ENCODE measurements at regions of chr11 and their contacts with region 1.

Region 1: GRCh38 chr11:3091791-3092602 is 34.8 kb upstream of the CARS1 start:
- DNase-seq: peak; percentile 54 to 88 (median 75)

Region 2: GRCh38 chr11:2489083-2489482 is 602.9 kb before region 1 on chr11:
- intact Hi-C with region 1: no loop called
- DNase-seq: no peak

Region 3: DNA sequence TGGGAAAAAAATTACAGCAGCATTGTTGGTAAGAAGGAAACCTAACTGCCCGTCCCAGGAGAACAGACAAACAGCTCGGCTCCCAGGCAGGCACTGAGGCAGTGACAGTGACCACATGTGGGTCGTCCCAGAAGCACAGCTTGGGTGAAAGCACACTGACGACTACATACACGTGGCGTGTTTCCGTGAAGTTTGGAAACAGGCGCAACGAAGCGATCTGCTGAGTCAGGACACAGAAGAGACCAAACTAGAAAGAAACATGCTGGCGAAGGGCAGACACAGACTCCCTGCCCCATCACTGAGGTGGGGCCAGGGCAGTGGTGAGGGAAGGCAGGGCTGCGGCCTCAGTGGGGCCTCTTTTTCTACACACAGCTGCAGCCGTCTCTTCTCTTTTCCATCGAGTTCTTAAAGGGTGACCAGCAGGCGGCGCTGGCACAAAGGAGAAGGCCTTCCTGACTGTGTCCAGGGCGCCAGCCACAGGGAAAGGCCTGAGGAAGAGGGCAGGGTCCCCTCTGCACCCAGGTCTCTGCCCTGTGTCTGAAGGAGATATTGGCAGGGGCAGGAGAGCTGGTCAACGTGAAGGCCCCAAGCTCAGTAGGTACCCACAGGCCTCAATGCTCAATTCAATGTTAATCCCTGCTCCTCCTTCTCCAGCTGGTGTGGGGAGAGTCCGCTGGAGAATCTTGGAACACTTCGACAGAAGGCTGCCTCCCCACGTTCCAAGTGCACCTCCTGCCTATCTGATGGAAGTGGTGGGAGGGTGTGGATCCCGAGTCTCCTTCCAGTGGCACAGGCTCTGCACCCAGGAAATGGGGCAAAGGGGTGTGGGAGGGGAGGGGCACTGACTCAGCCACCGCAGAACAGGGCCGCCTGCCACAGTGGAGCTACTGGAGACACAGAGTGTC is 54.7 kb before region 1 on chr11:
- intact Hi-C with region 1: loop called (anchors 2 kb)
- DNase-seq: peak; percentile 77 to 96 (median 89)

Region 4: GRCh38 chr11:3049430-3050243 is 42.4 kb before region 1 on chr11:
- intact Hi-C with region 1: loop called (anchors 5 kb)
- DNase-seq: peak; percentile 82 to 98 (median 93)

Region 5: GRCh38 chr11:3123761-3124733 is 32.0 kb after region 1 on chr11:
- intact Hi-C with region 1: no loop called
- DNase-seq: peak in 18 of 42 donors; percentile 10 to 82 (median 34)